ENCODE measurements at regions of chr19 and their contacts with region 1.

Region 1: DNA sequence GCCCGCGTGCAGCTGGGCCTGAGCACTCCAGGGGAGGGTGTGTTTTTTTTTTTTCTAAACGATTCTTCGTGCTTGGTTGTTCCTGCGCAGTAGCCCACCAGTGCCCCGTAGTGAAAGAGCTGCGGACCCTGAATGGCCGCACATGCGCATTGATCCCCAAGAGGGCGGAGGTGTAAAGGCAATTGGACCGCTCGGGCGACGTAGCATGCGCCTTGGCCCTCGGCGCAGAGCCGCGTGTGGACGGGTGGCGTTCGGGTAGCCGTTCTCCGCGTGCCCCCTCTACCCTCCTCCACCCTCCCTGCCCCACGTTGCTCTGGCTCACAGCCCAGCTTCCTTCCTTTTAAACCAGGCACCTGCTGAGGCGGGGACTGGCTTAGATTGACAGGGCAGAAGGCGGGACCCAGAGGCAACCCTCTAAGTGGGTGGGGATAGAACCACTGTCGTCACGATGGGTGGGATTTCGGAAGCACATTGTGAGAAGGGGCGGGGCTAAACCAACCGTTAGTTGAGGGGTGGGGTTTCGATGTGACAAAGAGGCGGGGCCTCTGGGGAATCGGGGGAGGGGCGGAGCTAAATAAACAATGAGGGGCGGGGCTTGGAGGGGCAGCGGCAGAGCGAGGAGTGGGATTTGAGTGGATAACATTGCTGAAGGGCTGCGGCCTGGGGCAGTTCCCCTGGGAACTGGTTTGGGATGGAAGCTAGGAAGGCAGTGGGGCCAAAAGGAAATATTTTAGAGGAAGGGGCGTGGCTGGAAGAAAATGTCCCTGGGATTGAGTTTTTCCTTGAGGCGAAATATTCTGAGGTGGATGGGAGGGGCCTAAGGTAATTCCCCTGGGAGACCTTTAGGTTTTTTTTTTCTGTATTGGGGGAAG is 543 bp upstream of the NUP62 start:
- DNase-seq: peak; percentile 88 to 95
- H3K4me3 ChIP-seq: peak overlapping the region; percentile 86 to 94
- H3K27ac ChIP-seq: peak overlapping the region; percentile 90 to 92
- H3K4me1 ChIP-seq: no peaks in the 10 kb centered on the region
- H3K27me3 ChIP-seq: no peaks in the 10 kb centered on the region
- CTCF ChIP-seq: peak in 1 of 4 experiments; percentile 39
- POLR2A ChIP-seq: peak in 1 of 2 donors; percentile 10

Region 2: GRCh38 chr19:49983645-49984229 is 53.9 kb after region 1 on chr19:
- intact Hi-C with region 1: loop called (anchors 10 kb)
- DNase-seq: peak; percentile 48 to 50
- H3K4me3 ChIP-seq: no peak overlapping the region
- H3K27ac ChIP-seq: no peak overlapping the region
- H3K4me1 ChIP-seq: no peaks in the 10 kb centered on the region
- H3K27me3 ChIP-seq: no peaks in the 10 kb centered on the region
- CTCF ChIP-seq: peak; percentile 65 to 75 (median 70)
- POLR2A ChIP-seq: no peak